Activated naive CD4-positive, alpha-beta T cell treated with anti-CD3 and anti-CD28 coated beads, Interleukin-2, amount 10 ng/mL, durations not matched to agents 7 days and 5 days (primary cell): ENCODE measurements at regions of chr17 and their contacts with region 1.

Region 1: DNA sequence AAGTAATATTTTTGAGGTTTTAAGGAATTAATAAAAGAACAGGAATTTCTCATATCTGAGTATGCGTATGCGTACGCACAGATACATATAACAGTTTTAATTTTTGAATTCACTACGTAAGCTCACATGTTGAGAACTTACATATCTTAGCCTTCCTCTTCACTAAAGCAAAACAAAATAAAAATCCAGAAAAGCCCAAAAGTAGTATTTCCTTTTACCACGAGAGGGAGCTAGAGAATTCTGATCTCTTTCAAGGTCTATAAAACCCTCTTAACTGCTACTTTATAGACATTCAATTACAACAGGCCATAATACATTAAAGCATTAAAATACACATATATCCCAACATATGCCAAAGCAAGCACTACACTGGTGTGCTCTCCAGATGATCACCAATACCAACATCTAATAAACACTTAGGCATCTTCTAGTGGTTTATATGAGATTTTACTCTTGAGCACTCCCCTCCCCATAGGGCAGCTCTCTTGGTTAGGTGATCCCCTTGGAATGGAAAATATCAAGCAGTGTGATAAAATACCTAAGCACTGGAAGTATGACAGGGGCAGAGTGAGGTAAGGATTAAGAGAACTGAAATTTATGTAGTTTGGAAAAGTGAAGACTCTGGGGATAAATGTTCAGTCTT is 94.0 kb downstream of the SKAP1 start:
- DNase-seq: no peak
- H3K4me3 Mint-ChIP-seq: no peak overlapping the region
- H3K27ac Mint-ChIP-seq: no peak overlapping the region
- H3K4me1 Mint-ChIP-seq: peaks cover 5% of the 10 kb centered on the region
- H3K27me3 Mint-ChIP-seq: no peaks in the 10 kb centered on the region

Region 2: DNA sequence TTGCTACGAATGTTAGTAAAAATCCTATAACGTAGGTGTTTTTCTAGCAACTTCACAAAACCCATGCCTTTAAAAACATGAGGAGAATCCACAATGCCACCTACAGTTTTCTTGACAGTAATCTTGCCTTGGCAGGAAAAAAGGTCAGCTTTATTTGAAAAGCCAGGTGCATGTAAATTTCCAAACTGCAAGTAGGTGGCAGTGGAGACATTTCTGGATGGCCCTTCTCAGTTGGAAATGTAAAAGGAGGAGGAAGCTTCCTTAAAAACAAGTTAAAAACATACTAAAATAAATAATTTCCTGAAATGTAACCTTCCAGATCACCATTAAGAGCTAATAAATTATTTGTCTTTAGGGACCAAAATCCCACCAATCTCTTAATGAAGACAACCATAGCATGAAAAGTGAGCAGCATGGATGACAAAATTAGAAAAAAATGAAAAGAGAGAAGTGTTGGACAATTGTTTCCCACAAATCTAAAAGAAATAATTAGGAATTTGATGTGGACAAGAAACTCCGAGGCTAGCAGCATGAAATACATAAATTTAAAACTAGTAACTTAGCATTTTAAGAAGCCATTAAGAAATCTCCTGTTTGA is 76.2 kb before region 1 on chr17:
- CTCF ChIA-PET with region 1: interaction called, 10 read pairs
- DNase-seq: no peak
- H3K4me3 Mint-ChIP-seq: no peak overlapping the region
- H3K27ac Mint-ChIP-seq: no peak overlapping the region
- H3K4me1 Mint-ChIP-seq: no peaks in the 10 kb centered on the region
- H3K27me3 Mint-ChIP-seq: no peaks in the 10 kb centered on the region

Region 3: DNA sequence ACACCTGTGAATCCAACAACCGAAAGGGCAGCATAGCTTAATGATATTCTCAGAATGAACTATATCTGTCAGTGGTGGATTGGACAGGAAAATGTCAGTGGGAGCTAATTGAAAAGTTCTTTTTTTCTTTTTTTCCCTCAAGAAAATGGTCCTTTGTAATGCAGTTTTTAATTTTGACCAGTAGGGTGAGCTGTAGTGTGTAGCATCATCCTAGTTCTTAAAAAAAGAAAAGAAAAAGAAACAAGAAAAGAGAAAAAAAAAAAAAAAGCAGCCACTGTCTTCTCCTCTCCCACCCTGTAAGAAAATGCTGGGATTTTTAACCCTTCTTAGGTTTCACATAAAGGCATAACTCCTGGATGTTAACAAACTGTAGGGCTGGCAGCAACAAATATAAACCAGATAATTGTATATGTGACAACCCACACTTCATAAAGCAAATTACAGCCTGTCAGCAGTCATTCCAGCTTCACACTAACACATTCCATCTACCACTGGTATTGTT is 15.9 kb after region 1 on chr17:
- CTCF ChIA-PET with region 1: interaction called, 14 read pairs
- DNase-seq: no peak
- H3K4me3 Mint-ChIP-seq: no peak overlapping the region
- H3K27ac Mint-ChIP-seq: no peak overlapping the region
- H3K4me1 Mint-ChIP-seq: peaks cover 6% of the 10 kb centered on the region
- H3K27me3 Mint-ChIP-seq: no peaks in the 10 kb centered on the region